Panc1 (cell line): ENCODE measurements at regions of chr7 and their contacts with region 1.

Region 1: GRCh38 chr7:98400542-98401340 is at the start of gene BAIAP2L1:
- DNase-seq: peak; percentile 69
- ATAC-seq: peak; percentile 94
- H3K4me3 ChIP-seq: peak within 1 kb of the TSS; percentile 73 to 79
- H3K27ac ChIP-seq: peak within 1 kb of the TSS; percentile 95
- H3K4me1 ChIP-seq: peaks cover 37% of the 10 kb centered on the region
- H3K27me3 ChIP-seq: no peaks in the 10 kb centered on the region
- CTCF ChIP-seq: no peak; the same call in 1 of the 2 replicates
- total RNA-seq, gene BAIAP2L1: 120 TPM

Region 2: DNA sequence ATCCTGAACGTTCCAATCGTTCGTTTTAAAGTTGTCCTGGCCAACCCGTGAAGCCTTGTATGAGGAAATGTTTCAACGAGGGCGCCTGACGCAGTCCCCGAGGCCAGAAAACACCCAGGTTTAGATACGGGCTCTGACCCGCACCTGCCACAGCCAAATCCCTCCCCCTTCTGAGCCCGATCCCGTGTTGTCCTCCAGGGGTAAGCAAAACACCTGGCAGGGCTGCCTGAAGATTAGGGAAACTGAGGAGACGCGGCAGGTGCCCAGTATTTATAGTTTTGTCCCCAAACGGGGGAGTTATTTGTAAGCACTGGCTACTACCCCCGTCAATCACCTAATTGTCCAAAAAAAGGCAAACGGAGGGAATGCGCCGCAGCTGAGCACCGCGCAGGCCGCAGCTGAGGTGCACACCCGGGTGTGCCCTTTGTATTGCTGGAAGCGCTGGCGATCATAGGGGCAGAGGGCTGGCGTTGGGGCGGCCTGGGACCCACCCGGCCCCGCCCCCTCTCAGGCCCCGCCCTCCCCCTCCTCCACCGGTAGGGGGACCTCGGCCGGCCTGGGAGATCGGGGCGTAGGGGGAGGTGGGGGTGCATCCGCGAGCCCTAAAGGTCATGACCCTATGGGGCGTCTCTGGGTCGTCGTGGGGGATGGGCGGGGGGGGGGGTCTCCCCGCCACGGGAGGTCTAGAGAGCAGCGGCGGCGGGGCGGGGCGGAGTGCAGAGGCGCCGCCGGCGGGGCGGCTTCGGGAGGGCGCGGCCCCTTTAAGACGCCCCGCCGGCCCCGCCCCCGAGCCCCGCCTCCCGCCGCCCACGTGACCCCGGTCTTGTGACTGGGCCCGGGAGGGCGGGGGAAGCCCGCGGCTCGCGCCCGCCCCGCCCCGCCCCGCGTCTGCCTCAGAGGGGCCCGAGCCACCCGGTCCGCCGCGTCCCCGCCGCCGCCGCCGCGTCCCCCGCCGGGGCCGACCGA is 119.7 kb before region 1 on chr7 and contains the start of gene BRI3:
- CTCF ChIA-PET with region 1: no interaction called
- POLR2A ChIA-PET with region 1: interaction called, 4 read pairs
- in situ Hi-C with region 1: loop called (anchors 25 kb)
- intact Hi-C with region 1: no loop called
- DNase-seq: no peak
- ATAC-seq: peak; percentile 76
- H3K4me3 ChIP-seq: peak within 1 kb of the TSS; percentile 89 to 90
- H3K27ac ChIP-seq: peak within 1 kb of the TSS; percentile 98
- H3K4me1 ChIP-seq: peaks cover 29% of the 10 kb centered on the region
- H3K27me3 ChIP-seq: no peaks in the 10 kb centered on the region
- CTCF ChIP-seq: no peak
- total RNA-seq, gene BRI3: 344 TPM

Region 3: DNA sequence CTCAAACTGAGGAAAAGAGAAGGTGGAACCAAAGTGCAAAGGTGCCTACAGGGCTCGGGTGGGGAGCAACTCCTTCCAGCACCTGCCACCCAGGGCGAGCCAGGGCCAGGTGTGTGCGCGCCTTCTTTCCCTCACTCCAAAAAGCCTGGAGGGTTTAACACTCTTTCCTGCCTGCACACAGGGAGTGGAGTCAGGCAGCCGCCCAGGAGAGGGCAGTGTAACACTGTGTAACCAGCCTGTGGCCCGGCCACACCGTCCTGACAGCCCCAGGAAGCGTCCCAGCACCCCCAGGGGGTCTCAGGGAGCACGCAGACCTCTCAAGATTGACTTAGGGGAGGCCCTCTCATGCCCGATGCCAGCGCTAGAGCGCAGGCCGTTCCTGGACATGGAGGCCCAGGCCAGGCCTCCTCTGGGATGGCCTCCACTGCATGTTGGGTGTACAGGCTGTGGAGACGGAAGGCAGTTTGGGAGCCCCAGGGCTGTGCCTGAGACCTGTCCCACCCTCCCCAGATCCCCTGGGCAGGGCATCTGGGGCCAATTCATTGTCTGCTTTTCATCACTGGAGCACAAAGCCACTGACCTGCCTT is 105.9 kb before region 1 on chr7:
- CTCF ChIA-PET with region 1: interaction called, 9 read pairs
- POLR2A ChIA-PET with region 1: no interaction called
- in situ Hi-C with region 1: loop called (anchors 25 kb)
- intact Hi-C with region 1: loop called (anchors 5 kb)
- DNase-seq: no peak
- ATAC-seq: peak; percentile 79
- H3K4me3 ChIP-seq: no peak overlapping the region
- H3K27ac ChIP-seq: peak overlapping the region; percentile 52
- H3K4me1 ChIP-seq: peaks cover 46% of the 10 kb centered on the region
- H3K27me3 ChIP-seq: no peaks in the 10 kb centered on the region
- CTCF ChIP-seq: peak; percentile 90

Region 4: GRCh38 chr7:98420966-98421612 is 20.3 kb after region 1 on chr7:
- CTCF ChIA-PET with region 1: interaction called, 22 read pairs
- POLR2A ChIA-PET with region 1: no interaction called
- in situ Hi-C with region 1: no loop called
- intact Hi-C with region 1: no loop called
- DNase-seq: peak; percentile 58
- ATAC-seq: peak; percentile 74
- H3K4me3 ChIP-seq: no peak overlapping the region
- H3K27ac ChIP-seq: peak overlapping the region; percentile 6; the same call in 1 of the 2 replicates
- H3K4me1 ChIP-seq: peaks cover 32% of the 10 kb centered on the region
- H3K27me3 ChIP-seq: no peaks in the 10 kb centered on the region
- CTCF ChIP-seq: peak; percentile 99

Region 5: DNA sequence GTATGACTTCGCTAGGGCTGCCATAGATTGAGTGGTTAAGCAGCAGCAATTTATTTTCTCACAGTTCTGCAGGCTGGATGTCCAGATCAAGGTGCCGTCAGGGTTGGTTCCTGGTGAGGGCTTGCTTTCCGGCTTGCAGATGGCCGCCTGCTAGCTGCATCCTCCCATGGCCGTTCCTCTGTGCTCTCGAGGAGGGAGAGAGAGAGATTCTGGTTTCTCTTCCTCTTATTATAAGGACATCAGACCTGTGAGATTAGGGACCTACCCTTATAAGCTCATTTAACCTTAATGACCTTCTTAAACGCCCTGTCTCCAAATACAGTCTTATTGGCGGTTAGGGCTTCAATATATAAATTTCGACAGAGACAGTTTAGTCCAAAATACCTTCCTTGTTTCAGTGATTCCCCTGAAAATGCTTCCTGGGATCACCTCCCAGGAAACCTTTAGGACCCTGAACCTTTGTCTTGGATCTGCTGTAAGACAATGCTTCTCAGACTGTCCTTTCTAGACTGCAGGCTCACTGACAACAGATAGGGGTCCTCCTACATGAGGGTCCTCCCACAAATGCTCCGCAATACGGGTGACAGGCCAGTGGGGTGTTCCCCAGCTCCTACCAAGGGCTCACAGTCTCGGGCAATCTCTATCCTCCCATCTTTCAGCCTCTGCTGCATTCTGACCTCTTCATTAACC is 82.7 kb after region 1 on chr7:
- CTCF ChIA-PET with region 1: interaction called, 5 read pairs
- POLR2A ChIA-PET with region 1: interaction called, 10 read pairs
- in situ Hi-C with region 1: no loop called
- intact Hi-C with region 1: no loop called
- DNase-seq: no peak
- ATAC-seq: no peak
- H3K4me3 ChIP-seq: no peak overlapping the region
- H3K27ac ChIP-seq: no peak overlapping the region
- H3K4me1 ChIP-seq: no peaks in the 10 kb centered on the region
- H3K27me3 ChIP-seq: no peaks in the 10 kb centered on the region
- CTCF ChIP-seq: no peak